GM10248 (cell line): ENCODE measurements at regions of chr13 and their contacts with region 1.

Region 1: DNA sequence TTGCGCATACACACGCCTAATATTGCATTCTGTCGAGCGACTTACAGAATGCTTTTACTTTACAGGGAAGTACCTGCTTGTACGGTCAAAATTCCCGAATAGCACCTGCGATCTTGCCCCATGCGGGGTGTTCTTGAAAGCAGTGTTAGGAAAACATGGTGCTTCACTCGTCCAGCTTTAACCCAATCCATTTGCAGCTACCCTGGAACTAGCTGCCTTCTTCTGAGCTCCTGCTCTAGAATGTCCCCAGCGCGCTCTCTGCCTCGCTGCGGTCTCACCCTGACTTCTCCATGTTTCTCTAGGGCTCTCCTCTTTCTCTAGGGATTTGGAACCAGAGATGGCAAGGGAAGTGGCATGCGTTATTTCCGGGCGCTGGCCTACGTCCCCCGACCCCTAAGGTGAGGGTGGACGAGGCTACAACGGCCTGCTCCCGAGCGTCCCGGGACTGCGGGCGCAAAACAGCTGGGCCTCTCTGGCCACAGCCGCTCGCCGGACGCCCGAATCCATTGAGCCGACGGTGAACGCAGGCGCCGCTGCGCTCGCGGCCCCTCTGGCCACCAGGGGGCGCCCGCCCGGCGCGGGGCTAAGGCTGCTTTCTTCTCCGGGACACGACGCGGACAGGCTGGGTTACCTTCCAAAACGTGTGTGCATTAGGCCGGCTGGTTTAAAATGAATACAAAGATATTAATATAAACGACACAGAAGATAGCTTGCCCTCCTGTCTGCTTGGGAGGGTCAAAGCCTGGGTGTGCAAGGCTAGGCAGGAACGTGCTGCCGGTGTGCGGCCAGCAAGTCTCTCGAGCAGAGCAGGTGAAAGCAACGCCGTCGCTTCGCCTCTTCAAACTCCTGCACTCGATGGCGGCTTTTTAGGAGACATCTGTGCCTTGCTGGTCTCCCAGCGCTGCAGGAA is 1.8 kb upstream of the SPRY2 start:
- DNase-seq: peak; percentile 78
- CTCF ChIP-seq: peak; percentile 87

Region 2: DNA sequence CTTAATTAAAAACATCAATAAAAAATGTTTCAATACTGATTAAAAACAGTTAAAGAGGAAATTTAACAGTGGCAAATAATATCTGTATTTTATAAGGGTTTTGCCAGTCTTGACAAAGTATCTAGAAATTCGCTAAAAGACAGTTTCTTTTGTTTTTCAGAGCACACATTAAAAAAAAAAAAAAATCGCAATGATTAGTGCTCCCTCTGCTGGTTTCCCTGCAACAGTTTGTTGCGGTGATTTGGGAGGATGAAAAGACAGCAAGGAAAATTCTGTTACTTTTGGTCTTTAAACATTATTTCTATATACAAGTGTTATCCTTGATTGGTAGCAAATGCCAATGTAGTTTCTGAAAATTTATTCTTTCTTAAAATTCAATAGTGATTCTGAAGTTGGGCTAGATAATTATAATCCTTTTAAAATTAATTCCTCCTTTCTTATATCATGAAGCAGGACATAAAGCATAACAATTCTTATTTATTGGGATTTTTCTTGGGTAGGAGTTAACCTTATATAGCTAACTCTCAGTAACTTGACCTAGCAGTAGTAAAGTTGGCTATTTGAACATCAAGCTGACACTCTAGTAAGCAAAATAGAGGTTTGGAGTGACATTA is 21.3 kb after region 1 on chr13:
- CTCF ChIA-PET with region 1: interaction called, 39 read pairs
- POLR2A ChIA-PET with region 1: no interaction called
- DNase-seq: peak; percentile 29
- CTCF ChIP-seq: peak; percentile 71